ENCODE measurements at regions of chrX and their contacts with region 1.

Region 1: GRCh38 chrX:41333744-41334259 is at the start of gene DDX3X:
- DNase-seq: peak; percentile 75 to 97 (median 93)

Region 2: DNA sequence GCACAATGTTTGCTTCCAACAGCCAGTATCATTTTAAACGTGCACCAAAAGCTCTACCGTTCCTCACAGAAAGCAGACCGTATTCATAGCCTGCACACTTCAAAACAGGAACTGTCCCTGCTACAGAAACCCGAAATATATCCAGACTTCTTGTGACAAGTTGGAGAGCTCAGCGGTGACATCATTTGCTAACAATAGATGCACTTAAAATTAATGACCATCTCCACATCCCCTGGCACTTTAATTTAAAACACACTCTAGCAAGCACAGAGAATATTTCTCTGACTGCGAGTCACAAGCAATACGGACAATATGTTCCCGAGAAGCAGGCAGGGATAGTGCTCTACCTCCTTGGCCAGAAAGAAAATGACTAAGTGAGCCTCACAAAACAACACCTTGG is 115.8 kb after region 1 on chrX:
- intact Hi-C with region 1: loop called (anchors 10 kb)
- DNase-seq: peak in 1 of 42 donors; percentile 8

Measured in head of caudate nucleus (tissue), 42 donors.